ENCODE measurements at regions of chr3 and their contacts with region 1.

Region 1: GRCh38 chr3:141237701-141238521 is 6.3 kb downstream of the PXYLP1 start:
- DNase-seq: peak; percentile 37
- ATAC-seq: peak; percentile 63
- H3K4me3 Mint-ChIP-seq: peak overlapping the region; percentile 41
- H3K27ac Mint-ChIP-seq: peak overlapping the region; percentile 88
- H3K4me1 Mint-ChIP-seq: peaks cover 89% of the 10 kb centered on the region
- H3K27me3 Mint-ChIP-seq: no peaks in the 10 kb centered on the region

Region 2: DNA sequence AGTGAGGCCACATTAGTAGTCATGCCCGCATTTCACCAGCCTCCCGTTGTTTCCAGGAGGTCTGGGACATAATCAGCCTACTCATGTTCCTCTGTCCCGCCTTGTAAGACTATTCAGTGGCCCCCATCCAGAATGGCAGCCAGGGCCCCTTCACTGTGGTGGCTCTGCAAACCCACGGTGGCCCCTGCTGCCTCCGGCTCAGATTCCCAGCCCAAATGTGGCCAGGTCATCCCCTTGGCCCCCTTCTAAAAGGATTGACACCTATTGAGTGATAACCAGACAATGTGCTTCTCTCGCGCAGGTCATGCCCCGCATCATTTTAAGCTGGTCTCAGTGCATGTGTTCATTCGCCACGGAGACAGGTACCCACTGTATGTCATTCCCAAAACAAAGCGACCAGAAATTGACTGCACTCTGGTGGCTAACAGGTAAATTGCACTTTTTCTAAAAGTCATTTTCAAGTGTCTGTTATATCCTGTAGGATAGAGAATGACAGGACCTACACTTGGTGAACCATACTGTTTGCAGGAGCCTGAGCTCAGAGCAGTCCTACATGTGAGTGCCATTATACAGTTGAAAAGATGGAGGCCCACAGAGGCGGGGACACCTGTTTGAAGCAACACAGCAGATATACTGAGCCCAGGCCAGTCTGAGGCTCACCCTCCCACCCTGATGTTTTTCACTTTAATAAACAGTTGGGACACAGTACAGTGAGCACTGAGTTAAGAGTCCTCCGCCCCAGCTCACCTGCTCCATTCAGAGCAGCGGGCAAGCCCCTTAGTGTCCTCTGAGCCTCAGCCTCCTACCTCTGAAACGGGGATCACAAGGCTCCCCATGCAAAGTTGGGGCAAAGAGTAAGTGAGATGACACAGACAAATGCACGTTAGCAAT is 41.4 kb after region 1 on chr3:
- CTCF ChIA-PET with region 1: interaction called, 65 read pairs
- POLR2A ChIA-PET with region 1: interaction called, 6 read pairs
- DNase-seq: peak; percentile 40
- ATAC-seq: peak; percentile 48
- H3K4me3 Mint-ChIP-seq: no peak overlapping the region
- H3K27ac Mint-ChIP-seq: peak overlapping the region; percentile 10
- H3K4me1 Mint-ChIP-seq: peaks cover 31% of the 10 kb centered on the region
- H3K27me3 Mint-ChIP-seq: no peaks in the 10 kb centered on the region

Region 3: GRCh38 chr3:141303481-141304223 is 65.7 kb after region 1 on chr3:
- CTCF ChIA-PET with region 1: interaction called, 82 read pairs
- POLR2A ChIA-PET with region 1: no interaction called
- DNase-seq: peak; percentile 83
- ATAC-seq: peak; percentile 74
- H3K4me3 Mint-ChIP-seq: no peak overlapping the region
- H3K27ac Mint-ChIP-seq: no peak overlapping the region
- H3K4me1 Mint-ChIP-seq: peaks cover 53% of the 10 kb centered on the region
- H3K27me3 Mint-ChIP-seq: peaks cover 2% of the 10 kb centered on the region

Measured in activated CD8-positive, alpha-beta T cell treated with anti-CD3 and anti-CD28 coated beads, Interleukin-2, amount 10 ng/mL, durations not matched to agents 7 days and 5 days (primary cell).